ENCODE measurements at regions of chr17 and their contacts with region 1.

Region 1: DNA sequence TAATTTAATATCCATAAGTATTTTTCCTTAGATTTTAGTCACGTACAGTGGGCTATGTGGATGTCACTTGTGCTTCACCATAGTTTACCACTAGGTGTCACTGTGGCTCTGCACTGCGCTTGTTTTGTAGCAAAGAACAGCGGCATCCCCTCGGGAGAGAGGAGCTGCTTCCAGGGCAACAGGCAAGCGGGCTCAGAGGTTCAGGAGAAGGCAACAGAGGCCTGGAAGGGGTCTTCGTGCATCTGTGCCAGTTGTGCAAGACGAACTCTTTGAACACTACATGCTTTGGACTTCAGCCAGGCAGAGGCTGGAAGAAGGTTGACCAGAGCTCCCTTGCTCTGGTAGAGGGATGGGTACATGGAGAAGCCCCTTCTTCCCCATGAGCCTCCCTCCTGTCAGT is 20.6 kb downstream of the CYB561 start:
- DNase-seq: peak; percentile 68 to 84
- ATAC-seq: peak; percentile 81 to 95 (median 90)
- H3K4me3 ChIP-seq: no peak overlapping the region
- H3K27ac ChIP-seq: no peak overlapping the region
- H3K4me1 ChIP-seq: no peaks in the 10 kb centered on the region
- H3K27me3 ChIP-seq: no peaks in the 10 kb centered on the region
- CTCF ChIP-seq: peak; percentile 97

Region 2: GRCh38 chr17:63349478-63350000 is 75.9 kb before region 1 on chr17:
- intact Hi-C with region 1: no loop called
- DNase-seq: no peak
- ATAC-seq: no peak
- H3K4me3 ChIP-seq: no peak overlapping the region
- H3K27ac ChIP-seq: no peak overlapping the region
- H3K4me1 ChIP-seq: no peaks in the 10 kb centered on the region
- H3K27me3 ChIP-seq: no peaks in the 10 kb centered on the region
- CTCF ChIP-seq: no peak

Region 3: DNA sequence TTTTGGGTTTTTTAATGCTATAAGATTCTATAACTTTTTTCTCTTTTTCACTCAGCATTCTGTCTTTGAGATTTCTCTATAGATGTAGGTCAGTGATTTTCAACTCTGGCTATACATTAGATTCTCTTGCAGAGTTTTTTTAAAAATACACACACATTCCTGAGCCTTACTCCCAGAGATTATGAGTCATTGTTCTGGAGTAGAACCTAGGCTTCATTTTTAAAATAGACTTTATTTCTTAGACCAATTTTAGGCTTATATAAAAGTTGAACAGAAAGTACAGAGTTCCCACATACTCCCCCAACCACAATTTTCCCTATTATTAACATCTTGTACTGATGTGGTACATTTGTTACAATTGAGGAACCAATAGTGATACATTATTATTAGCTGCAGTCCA is 42.7 kb before region 1 on chr17:
- intact Hi-C with region 1: no loop called
- DNase-seq: no peak
- ATAC-seq: no peak
- H3K4me3 ChIP-seq: no peak overlapping the region
- H3K27ac ChIP-seq: no peak overlapping the region
- H3K4me1 ChIP-seq: no peaks in the 10 kb centered on the region
- H3K27me3 ChIP-seq: no peaks in the 10 kb centered on the region
- CTCF ChIP-seq: no peak

Region 4: GRCh38 chr17:63478791-63479494 is 53.5 kb after region 1 on chr17:
- intact Hi-C with region 1: loop called (anchors 1 to 5 kb)
- DNase-seq: peak; percentile 76 to 86
- ATAC-seq: peak; percentile 74 to 88 (median 82)
- H3K4me3 ChIP-seq: peak overlapping the region; percentile 63
- H3K27ac ChIP-seq: no peak overlapping the region
- H3K4me1 ChIP-seq: peaks cover 11% of the 10 kb centered on the region
- H3K27me3 ChIP-seq: peaks cover 0 to 43% (median 15%) of the 10 kb centered on the region in 3 donors
- CTCF ChIP-seq: peak; percentile 60

Region 5: DNA sequence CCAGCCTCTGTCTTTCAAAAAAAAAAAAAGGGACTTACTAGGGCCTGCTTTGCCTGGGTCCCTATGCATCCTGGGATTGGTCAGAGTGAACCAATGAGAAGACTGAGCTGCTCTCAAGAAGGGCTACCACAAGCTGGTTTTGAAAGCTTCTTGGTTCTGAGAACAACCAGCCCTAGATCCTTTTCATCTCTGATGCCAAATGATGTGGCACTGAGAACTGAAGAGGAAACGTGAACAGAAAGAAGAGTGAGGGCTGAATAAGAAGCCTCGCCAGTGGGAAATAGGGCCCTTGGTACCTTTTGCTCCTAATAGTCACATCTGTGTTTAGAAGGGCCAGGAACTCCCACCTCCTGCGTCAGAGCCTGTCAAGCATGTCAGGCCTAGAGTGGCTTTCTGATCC is 185.9 kb after region 1 on chr17:
- intact Hi-C with region 1: loop called (anchors 2 kb)
- DNase-seq: no peak
- ATAC-seq: peak in 1 of 4 donors; percentile 16
- H3K4me3 ChIP-seq: no peak overlapping the region
- H3K27ac ChIP-seq: no peak overlapping the region
- H3K4me1 ChIP-seq: no peaks in the 10 kb centered on the region
- H3K27me3 ChIP-seq: no peaks in the 10 kb centered on the region
- CTCF ChIP-seq: no peak

Measured in psoas muscle (tissue), 8 donors.